ENCODE measurements at regions of chr18 and their contacts with region 1.

Region 1: DNA sequence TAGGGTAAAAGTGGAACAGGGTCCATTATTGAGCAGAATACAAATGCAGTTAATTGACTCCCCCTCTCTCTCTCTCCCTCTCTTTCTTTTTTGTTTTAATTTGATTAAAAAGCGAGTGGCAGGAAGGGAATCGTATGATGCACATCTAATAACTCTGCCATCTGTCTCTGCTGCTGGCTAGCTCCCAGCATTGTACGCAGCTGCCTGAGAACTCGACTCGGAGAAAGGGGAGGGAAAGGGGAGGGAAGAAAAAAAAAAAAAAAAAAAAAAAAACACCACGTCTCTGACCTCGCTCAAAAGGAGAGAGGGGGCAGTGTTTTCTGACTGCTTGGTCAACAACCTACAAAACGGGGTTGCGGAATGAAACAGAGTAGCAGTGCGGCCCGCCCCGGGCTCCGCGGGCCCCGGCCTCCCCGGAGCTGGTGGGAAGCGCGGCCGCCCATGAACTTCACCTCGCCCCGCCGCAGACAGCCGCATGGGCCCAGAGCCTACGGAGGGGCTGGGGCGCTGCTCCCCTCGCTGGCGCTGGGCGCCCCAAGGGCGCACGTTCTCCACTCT is 265.7 kb downstream of the TCF4 start:
- DNase-seq: peak; percentile 87 to 94 (median 89)
- ATAC-seq: peak; percentile 76 to 90 (median 87)
- H3K4me3 ChIP-seq: peak overlapping the region; percentile 49 to 79 (median 66)
- H3K27ac ChIP-seq: peak overlapping the region; percentile 83 to 99 (median 94)
- H3K4me1 ChIP-seq: peaks cover 0 to 44% (median 31%) of the 10 kb centered on the region in 12 donors
- H3K27me3 ChIP-seq: no peaks in the 10 kb centered on the region
- CTCF ChIP-seq: peak in 7 of 12 donors; percentile 12 to 48 (median 33)
- POLR2A ChIP-seq: peak in 1 of 2 donors; percentile 75

Region 2: GRCh38 chr18:55096261-55096951 is 225.9 kb before region 1 on chr18:
- intact Hi-C with region 1: loop called in 1 of 10 experiments (anchors 10 kb)
- DNase-seq: peak in 4 of 5 donors; percentile 38 to 44 (median 41)
- ATAC-seq: peak; percentile 77 to 87 (median 80)
- H3K4me3 ChIP-seq: no peak overlapping the region
- H3K27ac ChIP-seq: no peak overlapping the region
- H3K4me1 ChIP-seq: peaks cover 0 to 15% (median 5%) of the 10 kb centered on the region in 12 donors
- H3K27me3 ChIP-seq: no peaks in the 10 kb centered on the region
- CTCF ChIP-seq: peak in 11 of 12 donors; percentile 23 to 59 (median 36)
- POLR2A ChIP-seq: no peak

Region 3: DNA sequence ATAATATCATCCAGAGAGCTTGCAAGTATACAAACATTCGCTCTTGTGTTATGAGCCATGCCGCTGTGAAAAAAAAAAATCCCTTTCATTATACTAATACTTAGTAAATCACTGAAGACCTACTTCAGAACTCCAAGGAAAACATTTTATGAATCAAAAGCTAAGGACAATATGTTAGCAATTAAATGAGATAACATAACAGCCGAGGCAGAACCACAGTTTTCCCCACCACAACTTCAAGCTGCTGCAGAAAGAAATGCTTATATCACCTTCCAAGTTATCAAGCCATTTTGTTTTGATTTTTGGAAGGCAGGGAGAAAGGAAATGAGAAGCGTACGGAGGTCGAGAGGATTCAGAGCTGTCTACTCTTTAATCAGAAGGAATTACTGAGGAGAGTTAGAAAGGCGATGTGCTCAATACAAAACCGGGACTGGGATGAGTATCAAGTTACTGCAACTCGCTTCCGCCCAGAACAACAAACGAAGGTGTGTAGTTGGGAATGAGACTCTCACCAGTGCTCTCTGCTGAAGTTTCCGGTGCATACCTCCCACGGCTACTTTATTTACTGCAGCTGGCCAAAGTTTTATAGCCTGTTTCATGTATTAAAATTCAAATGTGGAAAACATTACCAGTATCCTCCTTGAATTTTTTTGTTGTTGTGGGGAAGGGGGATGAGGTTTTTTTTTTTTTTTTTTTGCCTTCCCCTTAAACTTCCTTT is 70.8 kb before region 1 on chr18:
- intact Hi-C with region 1: loop called in 3 of 10 experiments (anchors 5 kb)
- DNase-seq: peak in 2 of 5 donors; percentile 33 to 36
- ATAC-seq: peak in 2 of 4 donors; percentile 72 to 84
- H3K4me3 ChIP-seq: peak overlapping the region in 2 of 12 donors; percentile 17 to 40
- H3K27ac ChIP-seq: peak overlapping the region in 11 of 12 donors; percentile 45 to 79 (median 65)
- H3K4me1 ChIP-seq: peaks cover 0 to 65% (median 43%) of the 10 kb centered on the region in 12 donors
- H3K27me3 ChIP-seq: no peaks in the 10 kb centered on the region
- CTCF ChIP-seq: no peak
- POLR2A ChIP-seq: no peak

Region 4: GRCh38 chr18:55275039-55275901 is 47.0 kb before region 1 on chr18:
- intact Hi-C with region 1: loop called in 1 of 10 experiments (anchors 5 kb)
- DNase-seq: peak in 1 of 5 donors; percentile 35
- ATAC-seq: peak in 2 of 4 donors; percentile 69 to 75
- H3K4me3 ChIP-seq: no peak overlapping the region
- H3K27ac ChIP-seq: peak overlapping the region in 1 of 12 donors; percentile 4
- H3K4me1 ChIP-seq: peaks cover 0 to 40% (median 15%) of the 10 kb centered on the region in 12 donors
- H3K27me3 ChIP-seq: no peaks in the 10 kb centered on the region
- CTCF ChIP-seq: peak in 3 of 12 donors; percentile 9 to 28 (median 22)
- POLR2A ChIP-seq: no peak

Region 5: DNA sequence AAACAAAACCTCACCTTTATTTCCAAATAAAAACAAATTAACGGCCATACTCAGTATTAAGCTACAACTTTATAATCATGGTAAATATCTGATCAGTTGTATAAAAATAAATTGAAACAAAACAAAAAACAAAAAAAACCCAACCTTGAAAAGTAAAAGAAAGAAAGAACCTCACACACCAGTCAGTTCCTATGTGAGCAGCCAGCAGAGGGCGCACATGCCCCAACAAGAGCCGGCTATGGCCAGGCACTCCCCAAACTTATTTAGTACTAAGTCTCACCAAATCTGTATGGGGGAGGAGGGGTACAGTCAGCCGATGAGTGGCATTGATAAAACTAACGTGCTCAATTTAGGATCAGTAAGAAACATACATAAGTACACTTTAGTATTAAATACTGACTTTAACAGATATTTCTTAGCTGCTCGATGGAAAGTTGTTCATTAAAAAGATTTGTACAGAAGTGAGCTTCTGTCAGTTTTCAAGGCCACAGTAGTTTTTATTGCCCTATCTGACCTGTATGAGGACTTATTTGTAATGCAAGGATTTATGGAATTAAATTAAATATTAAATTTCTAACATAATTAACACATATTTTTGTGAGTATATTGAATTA is 93.1 kb after region 1 on chr18:
- intact Hi-C with region 1: loop called in 1 of 10 experiments (anchors 5 kb)
- DNase-seq: peak; percentile 85 to 92 (median 88)
- ATAC-seq: peak; percentile 85 to 93 (median 88)
- H3K4me3 ChIP-seq: no peak overlapping the region
- H3K27ac ChIP-seq: peak overlapping the region in 7 of 12 donors; percentile 1 to 58 (median 21)
- H3K4me1 ChIP-seq: peaks cover 0 to 67% (median 27%) of the 10 kb centered on the region in 12 donors
- H3K27me3 ChIP-seq: no peaks in the 10 kb centered on the region
- CTCF ChIP-seq: peak; percentile 83 to 97 (median 94)
- POLR2A ChIP-seq: no peak

Region 6: GRCh38 chr18:55534547-55534946 is 212.3 kb after region 1 on chr18:
- intact Hi-C with region 1: no loop called
- DNase-seq: no peak
- ATAC-seq: no peak
- H3K4me3 ChIP-seq: no peak overlapping the region
- H3K27ac ChIP-seq: no peak overlapping the region
- H3K4me1 ChIP-seq: peaks cover 0 to 27% (median 6%) of the 10 kb centered on the region in 12 donors
- H3K27me3 ChIP-seq: no peaks in the 10 kb centered on the region
- CTCF ChIP-seq: no peak
- POLR2A ChIP-seq: no peak

Measured in heart left ventricle (tissue), 16 donors.